Activated naive CD8-positive, alpha-beta T cell treated with anti-CD3 and anti-CD28 coated beads, Interleukin-2, amount 10 ng/mL, durations not matched to agents 7 days and 5 days (primary cell): ENCODE measurements at regions of chr21 and their contacts with region 1.

Region 1: GRCh38 chr21:41437729-41438128 is 11.7 kb downstream of the MX1 start:
- DNase-seq: no peak
- ATAC-seq: peak; percentile 20
- H3K4me3 Mint-ChIP-seq: no peak overlapping the region
- H3K27ac Mint-ChIP-seq: peak overlapping the region; percentile 63
- H3K4me1 Mint-ChIP-seq: peaks cover 71% of the 10 kb centered on the region
- H3K27me3 Mint-ChIP-seq: no peaks in the 10 kb centered on the region

Region 2: GRCh38 chr21:41460578-41461527 is 23.1 kb after region 1 on chr21:
- POLR2A ChIA-PET with region 1: interaction called, 11 read pairs
- DNase-seq: peak; percentile 63
- ATAC-seq: peak; percentile 63
- H3K4me3 Mint-ChIP-seq: no peak overlapping the region
- H3K27ac Mint-ChIP-seq: peak overlapping the region; percentile 72
- H3K4me1 Mint-ChIP-seq: peaks cover 16% of the 10 kb centered on the region
- H3K27me3 Mint-ChIP-seq: no peaks in the 10 kb centered on the region